ENCODE measurements at regions of chr3 and their contacts with region 1.

Region 1: GRCh38 chr3:152430223-152431002 is 161.7 kb downstream of the MBNL1 start:
- DNase-seq: no peak
- ATAC-seq: no peak
- H3K4me3 ChIP-seq: no peak overlapping the region
- H3K4me3 Mint-ChIP-seq: peak overlapping the region in 2 of 10 donors; percentile 40 to 48
- H3K27ac ChIP-seq: peak overlapping the region; percentile 35
- H3K27ac Mint-ChIP-seq: peak overlapping the region in 7 of 9 donors; percentile 67 to 86 (median 83)
- H3K4me1 ChIP-seq: peaks cover 5 to 6% of the 10 kb centered on the region in 2 donors
- H3K4me1 Mint-ChIP-seq: peaks cover 15 to 74% (median 60%) of the 10 kb centered on the region in 7 donors
- H3K27me3 ChIP-seq: no peaks in the 10 kb centered on the region
- H3K27me3 Mint-ChIP-seq: no peaks in the 10 kb centered on the region

Region 2: DNA sequence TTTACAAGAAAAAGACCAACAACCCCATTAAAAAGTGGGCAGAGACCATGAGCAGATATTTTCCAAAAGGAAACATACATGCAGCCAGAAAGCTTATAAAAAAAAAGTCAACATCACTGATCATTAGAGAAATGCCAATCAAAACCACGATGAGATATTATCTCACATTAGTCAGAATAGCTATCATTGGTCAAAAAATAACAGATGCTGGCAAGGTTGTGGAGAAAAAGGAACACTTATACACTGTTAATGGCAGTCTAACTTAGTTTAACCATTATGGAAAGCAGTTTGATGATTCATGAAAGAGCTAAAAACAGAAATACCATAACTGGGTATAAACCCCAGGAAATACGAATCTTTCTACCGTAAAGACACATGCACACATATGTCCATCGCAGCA is 480.7 kb before region 1 on chr3:
- CTCF ChIA-PET with region 1: no interaction called
- POLR2A ChIA-PET with region 1: no interaction called
- intact Hi-C with region 1: no loop called
- DNase-seq: no peak
- ATAC-seq: no peak
- H3K4me3 ChIP-seq: no peak overlapping the region
- H3K4me3 Mint-ChIP-seq: no peak overlapping the region
- H3K27ac ChIP-seq: no peak overlapping the region
- H3K27ac Mint-ChIP-seq: no peak overlapping the region
- H3K4me1 ChIP-seq: no peaks in the 10 kb centered on the region
- H3K4me1 Mint-ChIP-seq: no peaks in the 10 kb centered on the region
- H3K27me3 ChIP-seq: no peaks in the 10 kb centered on the region
- H3K27me3 Mint-ChIP-seq: peaks cover 5 to 43% (median 15%) of the 10 kb centered on the region in 5 donors

Region 3: GRCh38 chr3:152376351-152377183 is 53.8 kb before region 1 on chr3:
- CTCF ChIA-PET with region 1: no interaction called
- POLR2A ChIA-PET with region 1: no interaction called
- intact Hi-C with region 1: no loop called
- DNase-seq: no peak
- ATAC-seq: peak; percentile 81
- H3K4me3 ChIP-seq: no peak overlapping the region
- H3K4me3 Mint-ChIP-seq: peak overlapping the region; percentile 2 to 68 (median 24)
- H3K27ac ChIP-seq: peak overlapping the region; percentile 32
- H3K27ac Mint-ChIP-seq: peak overlapping the region; percentile 1 to 87 (median 71)
- H3K4me1 ChIP-seq: peaks cover 29 to 37% of the 10 kb centered on the region in 2 donors
- H3K4me1 Mint-ChIP-seq: peaks cover 51 to 98% (median 83%) of the 10 kb centered on the region in 7 donors
- H3K27me3 ChIP-seq: no peaks in the 10 kb centered on the region
- H3K27me3 Mint-ChIP-seq: no peaks in the 10 kb centered on the region

Region 4: DNA sequence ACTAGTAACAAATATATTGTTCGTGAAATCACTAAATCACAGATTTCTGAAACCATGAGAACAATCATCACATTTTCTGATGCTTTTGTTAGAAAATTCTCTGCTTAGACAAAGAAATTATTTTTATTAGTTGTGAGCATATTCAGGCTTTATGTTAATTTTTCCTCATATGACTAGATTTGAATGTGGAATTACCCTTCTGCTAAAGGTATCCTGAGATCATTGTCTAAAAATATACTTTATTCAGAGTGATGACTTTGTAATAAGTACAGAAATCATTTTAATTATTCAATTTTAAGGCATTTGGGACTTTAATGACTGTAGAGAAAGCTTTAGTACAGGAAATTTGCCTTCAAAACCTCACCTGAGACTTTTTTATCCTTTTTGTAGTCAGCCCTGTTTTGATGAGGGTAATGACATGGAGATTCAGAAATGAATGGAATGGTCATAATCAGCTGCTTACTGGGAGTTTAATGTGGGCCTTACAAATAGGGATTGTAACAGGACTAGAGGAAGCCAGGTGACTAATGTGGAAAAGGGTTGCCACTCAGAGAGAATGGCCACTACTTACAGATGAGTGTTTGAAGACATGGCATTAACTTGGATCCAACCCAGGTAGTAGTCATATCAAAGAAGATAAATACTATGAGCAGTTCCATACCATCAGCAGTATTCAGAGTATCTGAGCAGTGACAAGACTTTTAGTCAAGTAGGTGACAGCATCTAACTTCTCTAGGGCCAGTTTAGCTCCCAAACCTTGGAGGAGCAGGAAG is 13.4 kb before region 1 on chr3:
- CTCF ChIA-PET with region 1: no interaction called
- POLR2A ChIA-PET with region 1: interaction called, 3 read pairs
- intact Hi-C with region 1: loop called in 1 of 2 experiments (anchors 1 kb)
- DNase-seq: no peak
- ATAC-seq: no peak
- H3K4me3 ChIP-seq: no peak overlapping the region
- H3K4me3 Mint-ChIP-seq: peak overlapping the region in 4 of 10 donors; percentile 2 to 20 (median 8)
- H3K27ac ChIP-seq: no peak overlapping the region
- H3K27ac Mint-ChIP-seq: peak overlapping the region; percentile 3 to 71 (median 51)
- H3K4me1 ChIP-seq: peaks cover 10 to 17% of the 10 kb centered on the region in 2 donors
- H3K4me1 Mint-ChIP-seq: peaks cover 29 to 79% (median 59%) of the 10 kb centered on the region in 7 donors
- H3K27me3 ChIP-seq: no peaks in the 10 kb centered on the region
- H3K27me3 Mint-ChIP-seq: no peaks in the 10 kb centered on the region

Region 5: GRCh38 chr3:152444029-152444641 is 13.7 kb after region 1 on chr3:
- CTCF ChIA-PET with region 1: interaction called, 3 read pairs
- POLR2A ChIA-PET with region 1: interaction called, 5 read pairs
- intact Hi-C with region 1: loop called in 1 of 2 experiments (anchors 1 kb)
- DNase-seq: peak in 5 of 9 donors; percentile 31 to 42 (median 36)
- ATAC-seq: peak; percentile 60
- H3K4me3 ChIP-seq: no peak overlapping the region
- H3K4me3 Mint-ChIP-seq: peak overlapping the region in 6 of 10 donors; percentile 0 to 45 (median 26)
- H3K27ac ChIP-seq: peak overlapping the region; percentile 50
- H3K27ac Mint-ChIP-seq: peak overlapping the region; percentile 2 to 68 (median 56)
- H3K4me1 ChIP-seq: peaks cover 24 to 27% of the 10 kb centered on the region in 2 donors
- H3K4me1 Mint-ChIP-seq: peaks cover 49 to 90% (median 78%) of the 10 kb centered on the region in 7 donors
- H3K27me3 ChIP-seq: no peaks in the 10 kb centered on the region
- H3K27me3 Mint-ChIP-seq: no peaks in the 10 kb centered on the region

Measured in naive thymus-derived CD4-positive, alpha-beta T cell (primary cell).